WTC11 (cell line): ENCODE measurements at regions of chr11 and their contacts with region 1.

Region 1: GRCh38 chr11:118198370-118198769 is 21.9 kb upstream of the SCN2B start:
- DNase-seq: peak; percentile 82
- ATAC-seq: peak; percentile 84
- H3K4me3 Mint-ChIP-seq: no peak overlapping the region
- H3K27ac Mint-ChIP-seq: no peak overlapping the region
- H3K4me1 Mint-ChIP-seq: peaks cover 38% of the 10 kb centered on the region
- H3K27me3 Mint-ChIP-seq: no peaks in the 10 kb centered on the region; the same call in 1 of the 2 replicates
- CTCF ChIP-seq: 0 out of 2 replicates have a peak, but pooled peaks have one; percentile 45

Region 2: GRCh38 chr11:118152552-118153471 is 45.6 kb before region 1 on chr11 and contains the start of gene SCN4B:
- CTCF ChIA-PET with region 1: interaction called, 18 read pairs
- POLR2A ChIA-PET with region 1: no interaction called
- DNase-seq: peak; percentile 81
- ATAC-seq: peak; percentile 62
- H3K4me3 Mint-ChIP-seq: peak within 1 kb of the TSS; percentile 77
- H3K27ac Mint-ChIP-seq: no peak within 1 kb of the TSS
- H3K4me1 Mint-ChIP-seq: peaks cover 69% of the 10 kb centered on the region
- H3K27me3 Mint-ChIP-seq: peaks cover 84% of the 10 kb centered on the region
- CTCF ChIP-seq: no peak
- total RNA-seq, gene SCN4B: 3.5 to 4.5 TPM (median 4.4 TPM) in 3 replicates

Region 3: DNA sequence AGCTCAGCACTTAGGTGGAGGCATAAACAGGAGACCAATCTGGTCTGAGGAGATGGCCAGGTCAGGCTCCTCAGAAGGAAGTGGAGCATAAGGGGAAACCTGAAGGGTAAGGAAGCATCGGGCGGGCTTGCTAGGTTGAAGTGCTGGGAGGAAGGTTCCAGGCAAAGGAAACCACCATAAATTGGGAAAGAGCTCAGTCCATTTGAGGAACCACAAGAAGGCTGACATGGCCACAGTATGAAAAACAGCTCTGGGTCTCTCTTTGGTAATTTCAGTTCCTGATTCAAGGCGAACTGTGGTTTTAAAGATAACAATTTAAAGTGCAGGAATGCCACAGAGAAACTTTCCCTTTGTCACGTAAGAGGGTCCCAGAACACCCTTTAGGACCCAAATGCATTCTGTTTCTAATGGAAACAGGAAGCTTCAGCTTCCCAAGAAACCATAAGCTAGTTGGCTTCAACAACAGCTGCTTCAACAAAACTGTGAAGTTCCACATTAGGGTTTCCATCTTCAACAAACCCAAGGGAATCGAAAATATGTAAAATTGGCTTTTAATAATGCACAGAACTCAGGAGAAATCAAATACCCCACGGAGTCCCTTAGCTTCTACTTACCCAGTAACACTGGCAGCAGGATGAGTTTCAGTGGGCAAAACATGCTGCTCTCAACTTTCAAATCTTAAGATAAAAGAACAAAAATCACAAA is 16.0 kb after region 1 on chr11:
- CTCF ChIA-PET with region 1: interaction called, 44 read pairs
- POLR2A ChIA-PET with region 1: no interaction called
- DNase-seq: no peak
- ATAC-seq: no peak
- H3K4me3 Mint-ChIP-seq: no peak overlapping the region
- H3K27ac Mint-ChIP-seq: 0 out of 2 replicates have a peak overlapping the region, but pooled peaks have one; percentile 28
- H3K4me1 Mint-ChIP-seq: peaks cover 48% of the 10 kb centered on the region
- H3K27me3 Mint-ChIP-seq: peaks cover 3% of the 10 kb centered on the region
- CTCF ChIP-seq: no peak

Region 4: DNA sequence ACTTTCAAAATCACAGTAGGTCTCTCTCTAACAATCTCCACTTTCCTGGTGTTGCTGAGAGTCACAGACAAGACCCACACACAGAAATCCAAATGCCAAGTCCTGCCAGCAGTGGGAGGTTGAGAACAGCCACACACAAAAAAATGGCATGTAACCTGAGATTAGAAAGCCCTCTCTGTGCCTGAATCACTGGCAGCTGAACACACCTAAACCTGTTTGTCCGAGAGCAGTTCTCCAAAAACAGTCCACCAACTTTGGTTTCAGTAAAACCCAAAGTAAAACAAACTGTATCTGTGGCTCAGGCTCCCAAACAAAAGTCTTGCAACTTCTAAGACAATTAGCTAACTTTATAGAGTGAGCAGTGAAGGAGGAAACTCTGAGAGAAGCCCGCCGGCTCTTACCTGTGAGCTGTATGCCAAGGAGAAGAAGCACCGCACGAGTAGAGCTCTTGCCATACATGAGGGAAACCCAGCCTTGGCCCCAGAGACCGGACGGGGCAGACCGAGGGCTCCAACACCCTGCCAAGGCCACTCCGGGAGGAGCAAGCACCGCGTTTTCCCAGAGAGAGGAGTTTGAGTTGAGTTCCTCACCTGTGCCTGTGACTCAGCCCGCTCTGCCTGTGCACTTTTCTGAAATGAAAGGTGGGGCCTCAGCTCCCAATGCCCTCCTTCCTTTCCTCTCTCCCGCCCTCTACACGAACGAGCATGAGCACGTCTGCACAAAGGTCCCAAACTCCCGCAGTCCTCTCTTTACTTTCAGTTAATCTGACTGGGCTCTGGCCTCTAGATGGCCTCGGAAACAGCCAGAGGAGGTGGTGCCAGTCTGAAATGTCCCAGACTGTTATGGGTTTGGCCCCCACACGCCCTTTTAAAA is 65.6 kb after region 1 on chr11 and contains the start of gene MPZL2:
- CTCF ChIA-PET with region 1: interaction called, 15 read pairs
- POLR2A ChIA-PET with region 1: no interaction called
- DNase-seq: peak; percentile 42
- ATAC-seq: peak; percentile 85
- H3K4me3 Mint-ChIP-seq: peak within 1 kb of the TSS; percentile 67
- H3K27ac Mint-ChIP-seq: no peak within 1 kb of the TSS
- H3K4me1 Mint-ChIP-seq: peaks cover 35% of the 10 kb centered on the region
- H3K27me3 Mint-ChIP-seq: peaks cover 93% of the 10 kb centered on the region
- CTCF ChIP-seq: no peak
- total RNA-seq, gene MPZL2: 1.2 to 1.8 TPM (median 1.4 TPM) in 3 replicates

Region 5: DNA sequence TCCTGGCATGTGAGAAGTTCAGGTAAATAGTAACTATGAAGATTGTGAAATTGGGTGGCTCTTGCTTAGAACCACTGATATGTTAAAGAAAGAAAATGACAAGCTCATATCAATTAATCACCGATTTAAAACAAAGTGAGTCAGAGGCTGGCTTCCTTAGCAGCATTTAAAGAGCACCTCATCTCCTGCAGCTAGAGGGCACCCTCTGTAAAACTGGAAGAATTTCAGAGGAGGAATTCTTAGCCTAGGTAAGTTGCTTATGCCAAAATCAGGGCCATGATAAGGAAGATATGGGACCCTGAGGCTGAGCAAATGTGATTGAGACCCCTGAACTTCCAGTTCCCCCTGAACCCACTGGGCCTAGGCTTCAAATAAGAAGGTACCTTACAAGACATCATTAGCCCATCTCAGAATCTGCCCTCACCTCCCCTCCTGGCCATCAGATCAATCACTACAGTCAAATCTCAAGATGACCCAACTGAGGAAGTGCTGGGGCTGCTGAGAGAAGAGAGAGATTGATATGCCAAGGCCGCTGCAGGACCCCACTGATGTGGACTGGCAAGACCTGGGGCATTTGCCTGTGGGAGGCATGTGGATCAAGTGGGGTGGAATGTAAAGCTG is 97.6 kb after region 1 on chr11:
- CTCF ChIA-PET with region 1: interaction called, 41 read pairs
- POLR2A ChIA-PET with region 1: no interaction called
- DNase-seq: no peak
- ATAC-seq: peak; percentile 73
- H3K4me3 Mint-ChIP-seq: no peak overlapping the region
- H3K27ac Mint-ChIP-seq: no peak overlapping the region
- H3K4me1 Mint-ChIP-seq: peaks cover 7% of the 10 kb centered on the region; the same call in 1 of the 2 replicates
- H3K27me3 Mint-ChIP-seq: peaks cover 16% of the 10 kb centered on the region
- CTCF ChIP-seq: no peak